Left lung (tissue), 14 donors: ENCODE measurements at regions of chrX and their contacts with region 1.

Region 1: DNA sequence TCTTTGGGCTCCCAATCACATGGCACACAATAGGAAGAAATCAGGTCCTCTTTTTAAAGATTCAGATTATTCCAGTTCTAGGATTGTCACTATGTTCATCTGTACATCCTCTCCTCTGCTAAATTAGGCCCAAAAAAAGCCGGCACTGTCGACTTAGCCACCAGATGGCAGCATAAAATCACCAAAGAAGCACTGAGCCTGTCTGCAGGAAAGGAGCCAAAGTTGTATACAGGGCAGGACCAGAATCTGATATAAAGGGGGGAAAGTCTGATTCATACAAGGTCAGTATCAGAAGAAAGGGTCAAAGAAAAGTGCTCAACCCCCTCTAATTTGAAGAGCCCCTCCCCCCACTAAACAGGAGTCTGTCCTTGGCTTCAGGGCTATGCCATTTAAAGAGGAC is 292.5 kb downstream of the CHIC1 start:
- DNase-seq: peak in 3 of 4 donors; percentile 57 to 73 (median 61)
- ATAC-seq: peak; percentile 40
- H3K4me3 ChIP-seq: no peak overlapping the region
- H3K27ac ChIP-seq: no peak overlapping the region
- H3K4me1 ChIP-seq: no peaks in the 10 kb centered on the region
- H3K27me3 ChIP-seq: no peaks in the 10 kb centered on the region
- CTCF ChIP-seq: peak in 1 of 2 donors; percentile 78

Region 2: GRCh38 chrX:74133156-74133796 is 277.7 kb after region 1 on chrX:
- intact Hi-C with region 1: loop called in 1 of 2 experiments (anchors 5 kb)
- DNase-seq: peak in 2 of 4 donors; percentile 62
- ATAC-seq: peak; percentile 95
- H3K4me3 ChIP-seq: no peak overlapping the region
- H3K27ac ChIP-seq: no peak overlapping the region
- H3K4me1 ChIP-seq: no peaks in the 10 kb centered on the region
- H3K27me3 ChIP-seq: no peaks in the 10 kb centered on the region
- CTCF ChIP-seq: peak; percentile 50 to 73

Region 3: DNA sequence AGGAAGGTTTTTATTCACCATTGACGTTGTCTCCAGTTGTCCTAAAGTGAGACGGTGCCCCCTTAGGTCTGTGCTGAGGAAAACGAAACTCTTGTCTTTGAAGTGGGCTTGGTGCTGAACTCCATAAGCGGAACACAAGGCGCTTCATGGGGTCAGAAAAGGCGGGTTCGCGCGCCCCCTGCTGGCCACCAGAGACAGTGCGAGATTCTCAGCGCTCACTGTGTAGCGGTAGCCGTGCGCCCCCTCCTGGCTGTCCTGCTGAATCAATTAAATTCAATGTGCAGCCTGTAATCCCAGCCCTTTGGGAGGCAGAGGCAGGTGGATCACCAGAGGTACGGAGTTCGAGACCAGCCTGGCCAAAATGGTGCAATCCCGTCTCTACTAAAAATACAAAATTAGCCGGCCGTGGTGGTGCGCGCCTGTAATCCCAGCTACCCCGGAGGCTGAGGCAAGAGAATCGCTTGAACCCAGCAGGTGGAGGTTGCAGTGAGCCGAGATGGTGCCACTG is 694.8 kb after region 1 on chrX:
- intact Hi-C with region 1: loop called in 1 of 2 experiments (anchors 10 kb)
- DNase-seq: peak; percentile 67 to 93 (median 83)
- ATAC-seq: peak; percentile 100
- H3K4me3 ChIP-seq: no peak overlapping the region
- H3K27ac ChIP-seq: no peak overlapping the region
- H3K4me1 ChIP-seq: no peaks in the 10 kb centered on the region
- H3K27me3 ChIP-seq: no peaks in the 10 kb centered on the region
- CTCF ChIP-seq: peak; percentile 92 to 99